ENCODE measurements at regions of chr13 and their contacts with region 1.

Region 1: DNA sequence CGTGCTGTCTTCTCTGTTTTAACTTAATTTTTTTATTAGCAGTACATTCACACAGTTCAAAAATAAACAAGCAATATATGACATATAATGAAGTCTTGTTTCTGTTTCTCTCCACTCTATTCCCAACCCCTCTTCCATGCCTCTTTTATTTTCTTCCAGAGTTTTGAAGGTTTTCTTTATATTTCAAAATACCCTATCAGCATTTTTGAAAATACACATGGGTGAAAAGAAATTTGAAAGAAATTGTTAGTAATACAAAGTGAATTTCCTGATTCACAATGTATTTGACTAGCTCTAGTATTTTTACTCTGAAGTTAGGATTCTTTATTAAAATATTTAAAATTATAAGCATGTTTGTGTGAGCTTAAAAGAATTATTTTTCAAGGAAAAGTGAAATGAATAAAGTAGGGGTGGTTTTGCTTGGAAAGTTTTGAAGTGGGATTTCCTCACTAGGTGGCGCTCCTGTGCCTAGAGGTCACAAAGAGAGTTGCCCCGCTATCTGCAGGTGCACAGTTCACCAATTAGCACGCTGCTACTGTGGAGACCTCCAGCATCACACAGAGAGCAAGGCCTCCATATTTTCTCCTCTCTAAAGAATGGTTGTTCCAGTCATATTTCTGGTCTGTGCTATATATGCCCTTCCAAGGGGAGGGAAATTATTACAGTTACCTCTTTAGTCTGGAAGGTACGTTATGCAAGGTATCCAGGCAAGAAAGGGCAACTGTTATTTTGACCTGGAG is 37.6 kb downstream of the SOX21 start:
- DNase-seq: no peak

Region 2: GRCh38 chr13:94710881-94711560 is 36.2 kb after region 1 on chr13:
- intact Hi-C with region 1: no loop called
- DNase-seq: no peak

Region 3: DNA sequence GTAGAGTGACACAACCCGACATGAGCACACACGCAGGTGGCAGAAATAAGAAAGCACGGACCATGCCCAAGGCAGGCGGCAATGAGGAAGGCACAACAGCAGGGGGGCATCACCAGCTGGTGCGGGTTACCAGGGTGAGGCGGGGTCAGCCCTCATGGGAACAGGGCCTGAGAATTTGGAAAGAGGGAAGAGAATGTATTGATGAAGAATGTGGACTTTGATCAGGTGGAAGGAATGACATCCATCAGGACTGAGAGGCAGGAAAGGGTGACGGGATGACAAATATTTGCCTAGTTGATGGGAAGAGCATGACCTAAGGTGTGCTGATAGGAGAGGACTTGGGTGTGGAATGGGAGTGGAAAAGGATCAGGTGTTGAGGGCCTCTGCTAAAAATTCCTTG is 448.9 kb after region 1 on chr13:
- intact Hi-C with region 1: no loop called
- DNase-seq: no peak

Region 4: GRCh38 chr13:95156208-95156607 is 481.4 kb after region 1 on chr13:
- intact Hi-C with region 1: loop called (anchors 10 kb)
- DNase-seq: no peak

Measured in cardiac septum (tissue), 1 donor.